MCF 10A (cell line): ENCODE measurements at regions of chr6 and their contacts with region 1.

Region 1: GRCh38 chr6:167826230-167826895 is 348 bp upstream of the AFDN start:
- DNase-seq: peak; percentile 57
- H3K4me3 Mint-ChIP-seq: peak overlapping the region; percentile 96
- H3K27ac Mint-ChIP-seq: peak overlapping the region; percentile 61
- H3K4me1 Mint-ChIP-seq: peaks cover 15% of the 10 kb centered on the region
- H3K27me3 Mint-ChIP-seq: no peaks in the 10 kb centered on the region
- CTCF ChIP-seq: no peak

Region 2: DNA sequence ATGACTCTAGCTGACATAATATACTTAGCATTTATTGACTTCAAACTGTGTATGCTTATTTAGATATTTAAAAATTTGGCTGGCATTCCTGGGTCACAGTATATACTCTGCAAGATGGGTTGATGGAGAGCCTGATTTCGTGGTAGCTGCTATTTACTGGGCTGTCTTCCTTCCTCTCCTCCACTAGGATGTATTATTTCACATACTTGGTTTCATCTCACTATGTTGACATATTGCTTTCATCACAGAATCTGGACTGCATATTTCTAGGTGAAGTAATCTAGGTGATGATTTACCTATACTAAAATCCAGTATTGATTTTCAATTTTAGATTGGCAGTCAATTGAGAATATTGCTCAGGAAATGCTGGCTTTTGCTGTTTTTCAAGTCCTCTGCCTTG is 16.1 kb after region 1 on chr6:
- CTCF ChIA-PET with region 1: interaction called, 4 read pairs
- POLR2A ChIA-PET with region 1: interaction called, 67 read pairs
- intact Hi-C with region 1: no loop called
- DNase-seq: no peak
- H3K4me3 Mint-ChIP-seq: no peak overlapping the region
- H3K27ac Mint-ChIP-seq: no peak overlapping the region
- H3K4me1 Mint-ChIP-seq: peaks cover 11% of the 10 kb centered on the region
- H3K27me3 Mint-ChIP-seq: no peaks in the 10 kb centered on the region
- CTCF ChIP-seq: no peak

Region 3: DNA sequence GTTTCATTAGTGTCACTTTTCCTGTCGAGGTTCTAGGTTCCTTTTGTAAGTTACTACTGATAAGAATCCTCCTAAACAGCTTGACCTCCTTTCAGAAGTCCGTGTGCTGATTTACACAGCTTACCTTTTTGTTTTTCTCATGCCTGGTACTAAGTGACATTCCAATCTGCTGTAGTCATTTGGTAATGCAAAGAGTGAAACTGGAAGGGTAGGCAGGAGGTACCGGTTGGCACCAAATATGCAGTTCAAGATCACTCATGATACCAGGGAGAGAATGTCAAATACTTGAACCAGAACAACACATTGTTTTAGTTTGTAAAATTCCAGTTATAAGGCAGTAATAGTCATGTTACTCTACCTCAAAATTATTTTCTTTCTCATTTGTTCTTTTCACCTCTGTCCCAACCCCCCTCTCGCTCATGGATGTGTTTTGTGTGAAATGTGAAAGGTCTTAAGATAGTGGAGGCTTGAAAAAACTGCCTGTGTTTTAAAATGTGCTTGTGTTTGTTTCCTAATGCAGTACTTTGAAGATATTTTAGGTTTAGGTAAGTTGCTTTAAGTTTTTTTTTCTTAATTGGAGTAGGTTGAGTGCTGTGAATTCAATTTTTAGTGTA is 23.6 kb after region 1 on chr6:
- CTCF ChIA-PET with region 1: interaction called, 4 read pairs
- POLR2A ChIA-PET with region 1: interaction called, 249 read pairs
- intact Hi-C with region 1: no loop called
- DNase-seq: peak; percentile 91
- H3K4me3 Mint-ChIP-seq: peak overlapping the region; percentile 65
- H3K27ac Mint-ChIP-seq: peak overlapping the region; percentile 90
- H3K4me1 Mint-ChIP-seq: peaks cover 45% of the 10 kb centered on the region
- H3K27me3 Mint-ChIP-seq: no peaks in the 10 kb centered on the region
- CTCF ChIP-seq: no peak

Region 4: DNA sequence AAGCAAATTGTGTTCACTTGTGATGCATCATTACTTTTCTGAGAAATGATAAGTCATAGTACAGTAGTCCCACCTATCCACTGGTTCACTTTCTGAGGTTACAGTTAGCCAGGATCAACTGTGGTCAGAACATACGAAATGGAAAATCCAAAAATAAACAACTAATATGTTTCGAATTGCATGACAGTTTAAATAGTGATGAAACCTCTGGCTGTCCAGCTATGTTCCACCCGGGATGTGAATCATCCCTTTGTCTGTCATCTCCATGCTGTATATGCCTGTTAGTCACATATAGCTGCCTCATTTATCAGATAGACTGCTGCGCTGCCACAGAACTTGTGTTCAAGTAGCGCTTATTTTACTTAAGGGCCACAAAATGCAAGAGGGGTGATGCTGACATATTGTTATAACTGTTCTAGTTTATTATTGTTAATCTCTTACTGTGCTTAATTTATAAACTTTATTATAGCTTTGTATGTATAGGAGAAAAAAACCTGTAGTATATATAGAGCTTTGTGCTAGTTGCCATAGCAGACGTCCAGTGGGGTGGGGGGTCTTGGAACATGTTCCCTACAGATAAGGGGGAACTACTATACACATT is 29.6 kb after region 1 on chr6:
- CTCF ChIA-PET with region 1: interaction called, 5 read pairs
- POLR2A ChIA-PET with region 1: interaction called, 249 read pairs
- intact Hi-C with region 1: no loop called
- DNase-seq: peak; percentile 93
- H3K4me3 Mint-ChIP-seq: no peak overlapping the region
- H3K27ac Mint-ChIP-seq: peak overlapping the region; percentile 80
- H3K4me1 Mint-ChIP-seq: peaks cover 43% of the 10 kb centered on the region
- H3K27me3 Mint-ChIP-seq: no peaks in the 10 kb centered on the region
- CTCF ChIP-seq: no peak

Region 5: DNA sequence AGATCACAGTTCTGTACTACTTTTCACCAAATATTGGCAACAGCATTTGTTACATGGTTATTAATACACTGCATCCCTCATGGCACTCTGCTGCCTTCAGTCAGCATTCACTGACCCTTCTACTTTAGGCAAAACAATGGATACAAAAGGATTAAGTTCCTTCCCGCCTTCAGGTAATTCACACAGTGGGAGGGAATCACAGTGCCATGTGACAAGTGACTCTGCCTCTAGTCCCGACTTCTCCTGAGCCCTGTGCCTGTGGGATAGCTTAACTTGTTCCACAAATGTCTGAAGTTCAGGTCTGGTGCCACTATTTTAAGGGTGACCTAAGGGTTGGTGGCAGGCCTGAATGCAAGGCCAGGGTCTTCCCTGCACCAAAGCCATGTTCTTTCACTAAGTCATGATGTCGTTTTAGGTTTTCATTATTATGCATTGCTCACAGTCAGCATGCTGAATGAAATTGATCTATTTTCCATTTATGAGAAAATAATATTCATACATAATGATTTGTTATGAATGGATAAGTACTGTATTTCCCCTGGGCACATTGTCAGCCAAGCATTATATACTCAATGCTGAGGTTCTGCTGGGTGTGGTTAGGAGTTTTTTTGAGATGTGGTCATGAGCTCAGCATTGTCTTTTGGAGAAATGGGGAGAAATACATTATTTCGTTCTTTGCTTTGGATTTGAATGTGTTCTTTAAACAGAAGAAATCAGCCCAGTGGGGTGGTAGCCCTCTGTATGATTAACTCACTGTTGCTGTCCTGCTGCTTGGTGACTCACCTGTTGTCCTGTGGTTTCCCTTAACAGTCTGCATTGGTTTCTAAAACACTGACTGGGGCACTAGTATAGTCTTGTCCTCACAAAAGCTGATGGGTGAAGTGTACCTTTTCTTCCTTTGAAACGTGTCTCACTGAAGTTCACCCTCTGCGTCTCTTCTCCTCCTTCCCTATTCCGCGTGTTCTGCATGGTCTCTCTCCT is 66.8 kb after region 1 on chr6:
- CTCF ChIA-PET with region 1: interaction called, 4 read pairs
- POLR2A ChIA-PET with region 1: interaction called, 10 read pairs
- intact Hi-C with region 1: loop called (anchors 1 kb)
- DNase-seq: peak; percentile 74
- H3K4me3 Mint-ChIP-seq: no peak overlapping the region
- H3K27ac Mint-ChIP-seq: no peak overlapping the region
- H3K4me1 Mint-ChIP-seq: no peaks in the 10 kb centered on the region
- H3K27me3 Mint-ChIP-seq: no peaks in the 10 kb centered on the region
- CTCF ChIP-seq: no peak